ENCODE measurements at regions of chr7 and their contacts with region 1.

Region 1: GRCh38 chr7:149624419-149625339 is 127.1 kb upstream of the ZNF746 start:
- DNase-seq: peak; percentile 89
- H3K4me3 ChIP-seq: peak overlapping the region; percentile 76 to 90 (median 89)
- H3K27ac ChIP-seq: peak overlapping the region; percentile 72
- H3K4me1 ChIP-seq: peaks cover 10% of the 10 kb centered on the region
- H3K27me3 ChIP-seq: peaks cover under 1 to 10% of the 10 kb centered on the region in 2 experiments
- CTCF ChIP-seq: peak; percentile 79 to 89
- POLR2A ChIP-seq: peak; percentile 84

Region 2: GRCh38 chr7:149147072-149147751 is 477.5 kb before region 1 on chr7 and contains the start of gene ZNF398:
- CTCF ChIA-PET with region 1: no interaction called
- POLR2A ChIA-PET with region 1: no interaction called
- dilution Hi-C with region 1: no loop called
- intact Hi-C with region 1: loop called (anchors 2 kb)
- DNase-seq: peak; percentile 75
- H3K4me3 ChIP-seq: peak within 1 kb of the TSS; percentile 74 to 98 (median 87)
- H3K27ac ChIP-seq: peak within 1 kb of the TSS; percentile 57
- H3K4me1 ChIP-seq: peaks cover 4% of the 10 kb centered on the region
- H3K27me3 ChIP-seq: no peaks in the 10 kb centered on the region
- CTCF ChIP-seq: peak; percentile 42 to 79
- POLR2A ChIP-seq: peak; percentile 63
- total RNA-seq, gene ZNF398: 8.6 and 10.6 TPM in 2 replicates

Region 3: GRCh38 chr7:149239345-149240191 is 385.1 kb before region 1 on chr7 and contains the start of gene ZNF212:
- CTCF ChIA-PET with region 1: no interaction called
- POLR2A ChIA-PET with region 1: no interaction called
- dilution Hi-C with region 1: no loop called
- intact Hi-C with region 1: loop called (anchors 1 kb)
- DNase-seq: peak; percentile 91
- H3K4me3 ChIP-seq: peak within 1 kb of the TSS; percentile 62 to 86 (median 73)
- H3K27ac ChIP-seq: peak within 1 kb of the TSS; percentile 28
- H3K4me1 ChIP-seq: peaks cover 9% of the 10 kb centered on the region
- H3K27me3 ChIP-seq: no peaks in the 10 kb centered on the region
- CTCF ChIP-seq: peak; percentile 91 to 97
- POLR2A ChIP-seq: no peak
- total RNA-seq, gene ZNF212: 9.0 and 9.2 TPM in 2 replicates

Region 4: GRCh38 chr7:149310113-149310836 is 314.4 kb before region 1 on chr7:
- CTCF ChIA-PET with region 1: interaction called, 19 read pairs
- POLR2A ChIA-PET with region 1: no interaction called
- dilution Hi-C with region 1: no loop called
- intact Hi-C with region 1: loop called (anchors 1 kb)
- DNase-seq: peak; percentile 69
- H3K4me3 ChIP-seq: no peak overlapping the region
- H3K27ac ChIP-seq: no peak overlapping the region
- H3K4me1 ChIP-seq: no peaks in the 10 kb centered on the region
- H3K27me3 ChIP-seq: peaks cover 2 to 5% of the 10 kb centered on the region in 2 experiments
- CTCF ChIP-seq: peak; percentile 50 to 61
- POLR2A ChIP-seq: no peak

Region 5: GRCh38 chr7:149497456-149498261 is 127.0 kb before region 1 on chr7 and contains the start of gene ZNF746:
- CTCF ChIA-PET with region 1: no interaction called
- POLR2A ChIA-PET with region 1: no interaction called
- dilution Hi-C with region 1: no loop called
- intact Hi-C with region 1: loop called (anchors 1 kb)
- DNase-seq: peak; percentile 56
- H3K4me3 ChIP-seq: peak within 1 kb of the TSS; percentile 72 to 90 (median 77)
- H3K27ac ChIP-seq: peak within 1 kb of the TSS; percentile 49
- H3K4me1 ChIP-seq: peaks cover 11% of the 10 kb centered on the region
- H3K27me3 ChIP-seq: peaks cover 5 to 15% of the 10 kb centered on the region in 2 experiments
- CTCF ChIP-seq: peak; percentile 53 to 73
- POLR2A ChIP-seq: peak; percentile 65
- total RNA-seq, gene ZNF746: 20.8 and 22.3 TPM in 2 replicates

Region 6: GRCh38 chr7:149604521-149604920 is 20.2 kb before region 1 on chr7:
- CTCF ChIA-PET with region 1: no interaction called
- POLR2A ChIA-PET with region 1: no interaction called
- dilution Hi-C with region 1: no loop called
- intact Hi-C with region 1: no loop called
- DNase-seq: no peak
- H3K4me3 ChIP-seq: no peak overlapping the region
- H3K27ac ChIP-seq: no peak overlapping the region
- H3K4me1 ChIP-seq: no peaks in the 10 kb centered on the region
- H3K27me3 ChIP-seq: no peaks in the 10 kb centered on the region
- CTCF ChIP-seq: no peak
- POLR2A ChIP-seq: no peak

Region 7: GRCh38 chr7:149714050-149714909 is 89.6 kb after region 1 on chr7:
- CTCF ChIA-PET with region 1: no interaction called
- POLR2A ChIA-PET with region 1: no interaction called
- dilution Hi-C with region 1: no loop called
- intact Hi-C with region 1: loop called (anchors 2 kb)
- DNase-seq: peak; percentile 78
- H3K4me3 ChIP-seq: peak overlapping the region; percentile 38 to 86 (median 51)
- H3K27ac ChIP-seq: no peak overlapping the region
- H3K4me1 ChIP-seq: peaks cover 11% of the 10 kb centered on the region
- H3K27me3 ChIP-seq: peaks cover 0 to 4% of the 10 kb centered on the region in 2 experiments
- CTCF ChIP-seq: no peak
- POLR2A ChIP-seq: no peak

Region 8: DNA sequence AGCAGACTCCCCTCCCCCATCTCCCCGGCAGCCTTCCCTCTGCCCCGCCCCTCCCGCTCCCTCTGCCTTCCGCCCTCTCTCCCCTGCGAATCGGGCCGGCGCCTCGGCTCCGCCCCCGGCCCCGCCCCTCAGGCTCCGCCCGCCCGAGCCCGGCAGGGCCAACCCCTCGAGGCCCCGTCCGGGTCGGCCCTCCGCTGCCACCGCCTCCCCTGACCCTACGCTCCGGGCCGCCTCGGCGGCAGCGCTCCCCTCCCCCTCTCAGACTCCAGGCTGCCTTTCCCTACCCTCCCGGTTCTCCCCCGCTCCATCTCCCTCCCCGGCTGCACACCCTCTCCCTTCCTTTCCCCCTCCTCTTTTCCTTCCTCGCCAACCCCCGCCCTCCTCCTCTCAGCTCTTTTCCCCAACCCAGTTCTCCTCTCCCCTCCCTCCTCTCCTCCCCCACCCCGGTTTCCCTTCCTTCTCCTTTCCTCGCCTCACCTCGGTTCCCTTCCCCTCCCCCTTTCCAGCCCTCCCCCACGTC is 147.1 kb after region 1 on chr7:
- CTCF ChIA-PET with region 1: interaction called, 4 read pairs
- POLR2A ChIA-PET with region 1: interaction called, 3 read pairs
- dilution Hi-C with region 1: no loop called
- intact Hi-C with region 1: loop called (anchors 1 kb)
- DNase-seq: peak; percentile 95
- H3K4me3 ChIP-seq: peak overlapping the region; percentile 11 to 68 (median 44)
- H3K27ac ChIP-seq: no peak overlapping the region
- H3K4me1 ChIP-seq: peaks cover 19% of the 10 kb centered on the region
- H3K27me3 ChIP-seq: no peaks in the 10 kb centered on the region
- CTCF ChIP-seq: no peak
- POLR2A ChIP-seq: peak; percentile 51